Gastrocnemius medialis (tissue), 4 donors: ENCODE measurements at regions of chr3 and their contacts with region 1.

Region 1: GRCh38 chr3:42101048-42101447 is 9.9 kb downstream of the TRAK1 start:
- DNase-seq: peak; percentile 37 to 70
- ATAC-seq: peak; percentile 62 to 75
- H3K4me3 ChIP-seq: no peak overlapping the region
- H3K27ac ChIP-seq: peak overlapping the region; percentile 62 to 76 (median 72)
- H3K4me1 ChIP-seq: peaks cover 52 to 62% of the 10 kb centered on the region in 2 donors
- H3K27me3 ChIP-seq: no peaks in the 10 kb centered on the region
- CTCF ChIP-seq: no peak
- POLR2A ChIP-seq: no peak

Region 2: DNA sequence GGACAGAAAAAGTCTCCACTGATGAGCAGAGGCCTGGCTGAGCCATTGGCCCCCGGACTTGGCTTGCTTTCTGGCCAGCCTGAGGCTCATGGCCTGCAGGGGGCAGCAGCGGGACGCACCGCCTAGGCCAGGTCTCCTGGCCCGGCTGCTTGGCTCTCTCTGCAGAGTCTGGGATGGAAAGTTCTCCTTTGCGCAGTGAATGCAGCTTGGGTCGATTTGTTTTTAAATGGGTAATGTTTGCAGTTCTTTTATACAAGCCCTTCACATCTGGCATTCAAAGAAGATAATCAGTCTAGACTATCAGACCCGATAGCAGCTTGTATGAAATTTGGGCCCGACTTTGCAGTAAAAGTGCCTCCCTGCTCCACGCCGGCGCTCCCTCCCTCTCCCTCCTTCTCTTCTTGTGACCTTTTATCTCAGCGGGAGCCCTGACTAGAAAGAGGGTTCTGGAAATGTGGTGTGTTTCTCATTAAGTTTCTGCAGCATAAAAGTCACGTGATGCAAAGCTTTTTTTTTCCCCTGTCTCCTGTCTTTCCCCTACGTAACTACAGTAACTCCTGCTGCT is 1516.3 kb before region 1 on chr3:
- in situ Hi-C with region 1: no loop called
- intact Hi-C with region 1: loop called (anchors 10 kb)
- DNase-seq: peak; percentile 57 to 62
- ATAC-seq: peak; percentile 60 to 83
- H3K4me3 ChIP-seq: no peak overlapping the region
- H3K27ac ChIP-seq: no peak overlapping the region
- H3K4me1 ChIP-seq: no peaks in the 10 kb centered on the region
- H3K27me3 ChIP-seq: no peaks in the 10 kb centered on the region
- CTCF ChIP-seq: peak; percentile 63 to 95 (median 83)
- POLR2A ChIP-seq: no peak

Region 3: GRCh38 chr3:41900265-41900664 is 200.8 kb before region 1 on chr3:
- in situ Hi-C with region 1: loop called in 2 of 4 experiments (anchors 10 kb)
- intact Hi-C with region 1: no loop called
- DNase-seq: no peak
- ATAC-seq: no peak
- H3K4me3 ChIP-seq: no peak overlapping the region
- H3K27ac ChIP-seq: no peak overlapping the region
- H3K4me1 ChIP-seq: no peaks in the 10 kb centered on the region
- H3K27me3 ChIP-seq: no peaks in the 10 kb centered on the region
- CTCF ChIP-seq: no peak
- POLR2A ChIP-seq: no peak

Region 4: GRCh38 chr3:41961750-41962679 is 139.0 kb before region 1 on chr3 and contains the start of gene ULK4:
- in situ Hi-C with region 1: no loop called
- intact Hi-C with region 1: loop called (anchors 2 kb)
- DNase-seq: peak; percentile 96
- ATAC-seq: peak; percentile 98 to 99
- H3K4me3 ChIP-seq: peak within 1 kb of the TSS; percentile 71 to 95 (median 84)
- H3K27ac ChIP-seq: peak within 1 kb of the TSS; percentile 49 to 79 (median 74)
- H3K4me1 ChIP-seq: peaks cover 0 to 9% of the 10 kb centered on the region in 2 donors
- H3K27me3 ChIP-seq: no peaks in the 10 kb centered on the region
- CTCF ChIP-seq: no peak
- POLR2A ChIP-seq: peak in 1 of 2 donors; percentile 14
- total RNA-seq, gene ULK4: 2.0 to 3.0 (median 2.3) TPM